ENCODE measurements at regions of chr7 and their contacts with region 1.

Region 1: DNA sequence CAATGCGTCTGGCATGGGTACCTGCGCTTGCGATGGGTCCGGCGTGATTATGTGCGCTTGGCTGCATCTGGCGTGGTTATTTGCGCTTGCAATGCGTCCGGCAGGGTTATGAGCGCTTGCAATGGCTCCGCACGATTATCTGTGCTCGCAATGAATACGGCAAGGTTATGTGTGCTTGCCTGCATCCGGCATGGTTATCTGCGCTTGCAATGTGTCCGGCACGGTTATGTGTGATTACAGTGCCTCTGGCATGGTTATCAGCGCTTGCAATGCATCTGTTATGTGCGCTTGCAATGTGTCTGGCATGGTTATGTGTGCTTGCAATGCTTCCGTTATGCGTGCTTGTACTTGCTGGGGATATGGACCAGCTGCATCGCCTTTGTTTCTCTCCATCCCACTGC is 37.7 kb downstream of the RBAK start:
- DNase-seq: peak in 3 of 4 experiments; percentile 39 to 84 (median 51)
- ATAC-seq: peak; percentile 80
- H3K4me3 ChIP-seq: no peak overlapping the region
- H3K27ac ChIP-seq: no peak overlapping the region
- H3K4me1 ChIP-seq: peaks cover 14 to 18% of the 10 kb centered on the region in 2 experiments; a peak in 3 of 5 replicates
- H3K27me3 ChIP-seq: peaks cover 0 to 14% of the 10 kb centered on the region in 2 experiments; a peak in 2 of 5 replicates
- CTCF ChIP-seq: no peak
- EP300 ChIP-seq: peak; percentile 81; the same call in 1 of the 2 replicates
- POLR2A ChIP-seq: no peak
- RAD21 ChIP-seq: no peak

Region 2: DNA sequence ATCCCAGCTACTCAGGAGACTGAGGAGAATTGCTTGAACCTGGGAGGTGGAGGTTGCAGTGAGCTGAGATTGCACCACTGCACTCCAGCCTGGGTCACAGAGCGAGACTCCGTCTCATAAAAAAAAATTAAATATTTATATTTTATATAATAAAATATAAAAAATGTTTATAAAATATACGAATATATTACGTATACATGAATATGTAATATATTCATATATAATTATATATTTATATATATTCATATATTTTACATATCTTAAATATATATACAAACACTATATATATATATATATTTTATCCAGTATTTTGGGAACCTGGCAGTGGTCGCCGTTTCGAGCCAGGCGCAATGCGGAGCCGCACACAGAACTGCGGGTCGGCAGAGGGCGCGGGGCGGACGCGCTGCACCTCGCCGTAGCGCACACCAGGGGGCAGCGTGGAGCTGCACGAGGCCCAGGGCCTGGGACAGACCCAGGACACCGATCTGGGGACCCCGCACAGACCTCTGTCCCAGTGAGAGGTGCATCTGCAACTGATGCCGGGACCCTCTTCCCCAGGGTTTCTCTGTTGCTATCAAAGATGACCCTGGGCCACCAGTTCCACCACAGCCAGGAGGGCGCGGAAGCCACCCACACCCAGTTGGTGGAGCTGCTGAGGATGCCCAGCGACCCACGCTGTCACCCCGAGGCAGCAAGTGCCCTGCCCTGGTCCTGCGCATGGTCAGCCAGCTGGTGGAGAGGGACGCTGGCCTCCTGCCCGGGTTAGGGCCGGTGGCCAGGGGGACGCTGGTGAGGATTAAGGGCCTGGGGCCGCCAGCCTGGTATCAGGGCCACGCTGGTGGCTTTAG is 285.2 kb before region 1 on chr7:
- CTCF ChIA-PET with region 1: interaction called, 14 read pairs
- POLR2A ChIA-PET with region 1: no interaction called
- in situ Hi-C with region 1: loop called (anchors 10 kb)
- intact Hi-C with region 1: loop called (anchors 1 kb)
- DNase-seq: peak; percentile 76 to 86 (median 83)
- ATAC-seq: peak; percentile 92
- H3K4me3 ChIP-seq: no peak overlapping the region
- H3K27ac ChIP-seq: no peak overlapping the region
- H3K4me1 ChIP-seq: peaks cover 0 to 41% of the 10 kb centered on the region in 2 experiments; a peak in 3 of 5 replicates
- H3K27me3 ChIP-seq: no peaks in the 10 kb centered on the region
- CTCF ChIP-seq: peak; percentile 87 to 99 (median 99)
- EP300 ChIP-seq: no peak
- POLR2A ChIP-seq: no peak
- RAD21 ChIP-seq: peak; percentile 70 to 90

Region 3: GRCh38 chr7:4849369-4849768 is 233.9 kb before region 1 on chr7:
- CTCF ChIA-PET with region 1: interaction called, 10 read pairs
- POLR2A ChIA-PET with region 1: interaction called, 3 read pairs
- in situ Hi-C with region 1: no loop called
- intact Hi-C with region 1: loop called (anchors 1 kb)
- DNase-seq: peak; percentile 48 to 69 (median 60)
- ATAC-seq: peak; percentile 85
- H3K4me3 ChIP-seq: no peak overlapping the region
- H3K27ac ChIP-seq: no peak overlapping the region
- H3K4me1 ChIP-seq: peaks cover 6 to 7% of the 10 kb centered on the region in 2 experiments; a peak in 3 of 5 replicates
- H3K27me3 ChIP-seq: no peaks in the 10 kb centered on the region
- CTCF ChIP-seq: peak; percentile 61 to 77 (median 66)
- EP300 ChIP-seq: no peak
- POLR2A ChIP-seq: no peak
- RAD21 ChIP-seq: peak; percentile 49 to 71

Region 4: DNA sequence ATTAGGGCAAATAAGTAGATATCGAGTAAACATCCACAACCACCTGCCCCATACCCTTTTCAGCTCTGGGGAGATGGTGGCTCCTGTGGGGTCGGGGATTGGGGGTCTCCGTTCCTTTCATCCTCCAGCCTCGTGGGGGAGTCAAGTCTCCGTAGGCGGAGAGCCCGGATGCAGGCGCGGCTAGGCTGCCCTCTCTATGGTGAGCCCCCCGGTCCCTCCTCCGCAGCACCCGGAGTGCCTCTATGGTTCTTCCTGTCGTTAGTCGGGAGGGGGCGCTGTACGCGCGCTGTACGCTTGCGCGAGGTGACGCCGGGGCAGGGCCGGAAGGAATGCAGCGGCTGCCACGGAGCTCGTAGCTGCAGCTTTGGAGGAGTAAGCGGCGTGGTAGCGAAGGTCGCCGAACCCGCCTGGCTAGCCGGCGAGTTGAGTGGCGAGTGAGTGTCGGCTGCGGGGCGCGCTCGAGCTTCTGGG is 109.5 kb before region 1 on chr7:
- CTCF ChIA-PET with region 1: no interaction called
- POLR2A ChIA-PET with region 1: interaction called, 3 read pairs
- in situ Hi-C with region 1: no loop called
- intact Hi-C with region 1: loop called (anchors 1 kb)
- DNase-seq: peak; percentile 79 to 97 (median 82)
- ATAC-seq: peak; percentile 94
- H3K4me3 ChIP-seq: peak overlapping the region; percentile 85
- H3K27ac ChIP-seq: peak overlapping the region; percentile 90
- H3K4me1 ChIP-seq: peaks cover 4 to 11% of the 10 kb centered on the region in 2 experiments; a peak in 2 of 5 replicates
- H3K27me3 ChIP-seq: no peaks in the 10 kb centered on the region
- CTCF ChIP-seq: peak; percentile 88 to 91 (median 89); a peak in 5 of 6 replicates
- EP300 ChIP-seq: no peak
- POLR2A ChIP-seq: peak; percentile 69
- RAD21 ChIP-seq: peak in 1 of 2 experiments; percentile 66; a peak in 3 of 4 replicates

Region 5: DNA sequence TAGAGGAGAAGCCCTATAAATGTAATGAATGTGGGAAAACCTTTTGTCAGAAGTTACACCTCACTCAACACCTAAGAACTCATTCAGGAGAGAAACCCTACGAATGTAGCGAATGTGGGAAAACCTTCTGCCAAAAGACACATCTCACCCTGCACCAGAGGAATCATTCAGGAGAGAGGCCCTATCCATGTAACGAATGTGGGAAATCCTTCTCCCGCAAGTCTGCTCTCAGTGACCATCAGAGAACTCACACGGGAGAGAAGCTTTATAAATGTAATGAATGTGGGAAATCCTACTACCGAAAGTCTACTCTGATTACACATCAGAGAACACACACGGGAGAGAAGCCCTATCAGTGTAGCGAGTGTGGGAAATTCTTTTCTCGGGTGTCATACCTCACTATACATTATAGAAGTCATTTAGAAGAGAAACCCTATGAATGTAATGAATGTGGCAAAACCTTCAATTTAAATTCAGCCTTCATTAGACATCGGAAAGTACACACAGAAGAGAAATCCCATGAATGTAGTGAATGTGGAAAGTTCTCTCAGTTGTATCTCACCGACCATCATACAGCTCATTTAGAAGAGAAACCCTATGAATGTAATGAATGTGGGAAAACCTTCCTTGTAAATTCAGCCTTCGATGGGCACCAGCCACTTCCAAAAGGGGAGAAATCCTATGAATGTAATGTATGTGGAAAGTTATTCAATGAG is 18.8 kb before region 1 on chr7:
- CTCF ChIA-PET with region 1: no interaction called
- POLR2A ChIA-PET with region 1: no interaction called
- in situ Hi-C with region 1: no loop called
- intact Hi-C with region 1: no loop called
- DNase-seq: no peak
- ATAC-seq: no peak
- H3K4me3 ChIP-seq: no peak overlapping the region
- H3K27ac ChIP-seq: no peak overlapping the region
- H3K4me1 ChIP-seq: no peaks in the 10 kb centered on the region
- H3K27me3 ChIP-seq: no peaks in the 10 kb centered on the region
- CTCF ChIP-seq: no peak
- EP300 ChIP-seq: no peak
- POLR2A ChIP-seq: no peak; the same call in 1 of the 2 replicates
- RAD21 ChIP-seq: no peak